ENCODE measurements at regions of chr13 and their contacts with region 1.

Region 1: GRCh38 chr13:30617315-30618185 is at the start of gene USPL1:
- DNase-seq: peak; percentile 96
- ATAC-seq: peak; percentile 84
- H3K4me3 ChIP-seq: peak within 1 kb of the TSS; percentile 87
- H3K27ac ChIP-seq: peak within 1 kb of the TSS; percentile 88
- H3K4me1 ChIP-seq: peaks cover 24% of the 10 kb centered on the region
- H3K27me3 ChIP-seq: no peaks in the 10 kb centered on the region
- CTCF ChIP-seq: no peak
- total RNA-seq, gene USPL1: 6.0 and 9.0 TPM in 2 replicates

Region 2: GRCh38 chr13:29782798-29783197 is 834.8 kb before region 1 on chr13:
- CTCF ChIA-PET with region 1: no interaction called
- POLR2A ChIA-PET with region 1: no interaction called
- intact Hi-C with region 1: no loop called
- DNase-seq: no peak
- ATAC-seq: no peak
- H3K4me3 ChIP-seq: no peak overlapping the region
- H3K27ac ChIP-seq: no peak overlapping the region
- H3K4me1 ChIP-seq: no peaks in the 10 kb centered on the region
- H3K27me3 ChIP-seq: no peaks in the 10 kb centered on the region
- CTCF ChIP-seq: no peak

Region 3: GRCh38 chr13:30422054-30422839 is 195.3 kb before region 1 on chr13 and contains the start of gene UBE2L5:
- CTCF ChIA-PET with region 1: no interaction called
- POLR2A ChIA-PET with region 1: interaction called, 4 read pairs
- intact Hi-C with region 1: loop called (anchors 1 kb)
- DNase-seq: peak; percentile 62
- ATAC-seq: peak; percentile 87
- H3K4me3 ChIP-seq: peak within 1 kb of the TSS; percentile 82
- H3K27ac ChIP-seq: peak within 1 kb of the TSS; percentile 42
- H3K4me1 ChIP-seq: peaks cover 16% of the 10 kb centered on the region
- H3K27me3 ChIP-seq: no peaks in the 10 kb centered on the region
- CTCF ChIP-seq: no peak
- total RNA-seq, gene UBE2L5: not detected in 2 replicates

Region 4: GRCh38 chr13:30585748-30586262 is 31.7 kb before region 1 on chr13:
- CTCF ChIA-PET with region 1: interaction called, 7 read pairs
- POLR2A ChIA-PET with region 1: interaction called, 7 read pairs
- intact Hi-C with region 1: loop called (anchors 1 kb)
- DNase-seq: peak; percentile 89
- ATAC-seq: peak; percentile 90
- H3K4me3 ChIP-seq: peak overlapping the region; percentile 40; the same call in 1 of the 2 replicates
- H3K27ac ChIP-seq: peak overlapping the region; percentile 89
- H3K4me1 ChIP-seq: peaks cover 37% of the 10 kb centered on the region
- H3K27me3 ChIP-seq: no peaks in the 10 kb centered on the region
- CTCF ChIP-seq: no peak

Region 5: GRCh38 chr13:30673669-30674521 is 56.3 kb after region 1 on chr13:
- CTCF ChIA-PET with region 1: no interaction called
- POLR2A ChIA-PET with region 1: no interaction called
- intact Hi-C with region 1: loop called (anchors 5 kb)
- DNase-seq: peak; percentile 83
- ATAC-seq: peak; percentile 85
- H3K4me3 ChIP-seq: peak overlapping the region; percentile 59
- H3K27ac ChIP-seq: no peak overlapping the region
- H3K4me1 ChIP-seq: no peaks in the 10 kb centered on the region; the same call in 1 of the 2 replicates
- H3K27me3 ChIP-seq: no peaks in the 10 kb centered on the region
- CTCF ChIP-seq: no peak; the same call in 1 of the 2 replicates

Region 6: GRCh38 chr13:30802953-30803478 is 185.5 kb after region 1 on chr13:
- CTCF ChIA-PET with region 1: no interaction called
- POLR2A ChIA-PET with region 1: no interaction called
- intact Hi-C with region 1: loop called (anchors 2 kb)
- DNase-seq: peak; percentile 73
- ATAC-seq: peak; percentile 97
- H3K4me3 ChIP-seq: peak overlapping the region; percentile 26; the same call in 1 of the 2 replicates
- H3K27ac ChIP-seq: no peak overlapping the region
- H3K4me1 ChIP-seq: no peaks in the 10 kb centered on the region; the same call in 1 of the 2 replicates
- H3K27me3 ChIP-seq: no peaks in the 10 kb centered on the region
- CTCF ChIP-seq: peak; percentile 89